ENCODE measurements at regions of chr19 and their contacts with region 1.

Region 1: DNA sequence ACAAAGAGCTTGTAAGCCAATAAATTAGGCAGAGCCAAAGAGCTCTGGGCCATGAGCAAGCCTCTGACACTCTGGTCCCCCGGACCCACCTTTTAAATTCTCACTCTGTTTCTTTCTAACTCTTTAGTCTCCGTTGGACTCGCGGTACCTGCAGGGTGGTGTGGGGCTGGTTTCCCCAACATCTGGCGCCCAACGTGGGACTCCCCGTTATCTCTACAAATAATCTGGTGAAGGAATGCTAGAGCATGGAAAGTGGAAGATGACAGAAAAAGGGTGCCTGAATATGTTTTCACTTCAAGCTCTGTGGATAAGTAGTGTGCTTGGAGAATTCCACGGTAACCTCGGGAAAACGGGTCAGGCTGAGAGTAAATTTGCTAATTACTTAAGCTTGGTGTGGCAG is 36.5 kb upstream of the CYP2B6 start:
- DNase-seq: peak in 1 of 2 experiments; percentile 51
- ATAC-seq: no peak
- H3K4me3 ChIP-seq: no peak overlapping the region
- H3K27ac ChIP-seq: no peak overlapping the region
- H3K4me1 ChIP-seq: no peaks in the 10 kb centered on the region
- CTCF ChIP-seq: no peak
- EP300 ChIP-seq: no peak
- POLR2A ChIP-seq: no peak
- RAD21 ChIP-seq: no peak

Region 2: DNA sequence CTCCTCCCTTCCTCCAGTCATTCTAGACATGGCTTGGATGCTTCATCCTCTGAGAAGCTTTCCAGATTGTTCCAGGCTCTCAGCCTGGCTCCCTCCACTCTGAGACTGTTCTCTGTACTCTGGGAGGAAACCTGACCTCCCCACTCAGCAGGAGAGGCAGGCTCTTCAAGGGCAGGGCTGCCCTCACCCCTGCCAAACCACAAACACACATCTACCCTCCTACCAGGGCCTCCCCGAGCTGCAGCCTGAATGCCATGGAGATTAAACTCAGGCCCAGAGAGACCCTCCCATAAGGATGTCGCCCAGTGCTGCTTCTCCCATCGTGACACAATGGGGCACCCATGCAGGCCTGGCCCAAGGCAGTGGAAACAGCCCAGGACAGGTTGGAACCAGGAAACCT is 280.3 kb before region 1 on chr19:
- CTCF ChIA-PET with region 1: no interaction called
- POLR2A ChIA-PET with region 1: no interaction called
- DNase-seq: no peak
- ATAC-seq: no peak; a peak in 1 of 6 replicates
- H3K4me3 ChIP-seq: no peak overlapping the region
- H3K27ac ChIP-seq: no peak overlapping the region
- H3K4me1 ChIP-seq: no peaks in the 10 kb centered on the region
- CTCF ChIP-seq: no peak
- EP300 ChIP-seq: no peak
- POLR2A ChIP-seq: no peak
- RAD21 ChIP-seq: no peak

Region 3: DNA sequence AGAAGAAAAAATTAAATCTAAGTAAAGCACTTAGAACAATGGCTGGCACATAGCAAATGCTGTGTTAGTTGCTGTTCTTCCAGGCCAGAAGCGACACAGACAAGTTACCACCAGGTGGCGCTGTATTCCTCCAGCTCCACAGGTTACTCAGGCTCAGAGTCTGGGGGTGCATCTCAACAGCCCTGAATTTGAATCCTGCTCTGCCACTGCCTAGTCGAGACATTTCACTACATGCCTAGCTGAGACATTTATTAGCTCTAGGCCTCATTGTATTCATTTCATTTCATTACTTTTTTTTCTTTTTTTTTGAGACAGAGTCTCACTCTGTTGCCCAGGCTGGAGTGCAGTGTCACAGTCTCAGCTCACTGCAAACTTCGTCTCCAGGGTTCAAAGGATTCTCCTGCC is 20.1 kb after region 1 on chr19:
- CTCF ChIA-PET with region 1: interaction called, 15 read pairs
- POLR2A ChIA-PET with region 1: no interaction called
- DNase-seq: peak; percentile 89 to 90
- ATAC-seq: peak; percentile 81 to 96; a peak in 5 of 6 replicates
- H3K4me3 ChIP-seq: no peak overlapping the region
- H3K27ac ChIP-seq: no peak overlapping the region
- H3K4me1 ChIP-seq: no peaks in the 10 kb centered on the region
- CTCF ChIP-seq: peak; percentile 99
- EP300 ChIP-seq: no peak
- POLR2A ChIP-seq: no peak
- RAD21 ChIP-seq: peak; percentile 85 to 87

Region 4: DNA sequence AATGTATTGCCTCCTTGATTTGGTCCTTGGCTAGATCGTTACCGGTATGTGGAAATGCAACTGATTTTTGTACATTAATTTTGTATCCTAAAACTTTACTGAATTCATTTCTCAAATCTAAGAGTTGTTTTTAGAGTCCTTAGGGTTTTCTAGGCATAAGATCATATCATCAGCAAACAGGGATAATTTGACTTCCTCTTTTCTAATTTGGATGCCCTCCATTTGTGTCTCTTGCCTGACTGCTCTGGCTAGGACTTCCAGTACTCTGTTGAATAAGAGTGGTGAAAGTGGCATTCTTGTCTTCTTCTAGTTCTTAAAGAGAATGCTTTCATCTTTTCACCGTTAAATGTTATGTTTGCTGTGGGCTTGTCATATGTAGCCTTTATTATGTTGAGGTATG is 121.7 kb after region 1 on chr19:
- CTCF ChIA-PET with region 1: no interaction called
- POLR2A ChIA-PET with region 1: no interaction called
- DNase-seq: no peak
- ATAC-seq: no peak; a peak in 1 of 6 replicates
- H3K4me3 ChIP-seq: no peak overlapping the region
- H3K27ac ChIP-seq: no peak overlapping the region
- H3K4me1 ChIP-seq: no peaks in the 10 kb centered on the region
- CTCF ChIP-seq: no peak
- EP300 ChIP-seq: no peak
- POLR2A ChIP-seq: no peak
- RAD21 ChIP-seq: no peak

Measured in A549 (cell line).